Vagina (tissue), 2 donors: ENCODE measurements at regions of chr2 and their contacts with region 1.

Region 1: DNA sequence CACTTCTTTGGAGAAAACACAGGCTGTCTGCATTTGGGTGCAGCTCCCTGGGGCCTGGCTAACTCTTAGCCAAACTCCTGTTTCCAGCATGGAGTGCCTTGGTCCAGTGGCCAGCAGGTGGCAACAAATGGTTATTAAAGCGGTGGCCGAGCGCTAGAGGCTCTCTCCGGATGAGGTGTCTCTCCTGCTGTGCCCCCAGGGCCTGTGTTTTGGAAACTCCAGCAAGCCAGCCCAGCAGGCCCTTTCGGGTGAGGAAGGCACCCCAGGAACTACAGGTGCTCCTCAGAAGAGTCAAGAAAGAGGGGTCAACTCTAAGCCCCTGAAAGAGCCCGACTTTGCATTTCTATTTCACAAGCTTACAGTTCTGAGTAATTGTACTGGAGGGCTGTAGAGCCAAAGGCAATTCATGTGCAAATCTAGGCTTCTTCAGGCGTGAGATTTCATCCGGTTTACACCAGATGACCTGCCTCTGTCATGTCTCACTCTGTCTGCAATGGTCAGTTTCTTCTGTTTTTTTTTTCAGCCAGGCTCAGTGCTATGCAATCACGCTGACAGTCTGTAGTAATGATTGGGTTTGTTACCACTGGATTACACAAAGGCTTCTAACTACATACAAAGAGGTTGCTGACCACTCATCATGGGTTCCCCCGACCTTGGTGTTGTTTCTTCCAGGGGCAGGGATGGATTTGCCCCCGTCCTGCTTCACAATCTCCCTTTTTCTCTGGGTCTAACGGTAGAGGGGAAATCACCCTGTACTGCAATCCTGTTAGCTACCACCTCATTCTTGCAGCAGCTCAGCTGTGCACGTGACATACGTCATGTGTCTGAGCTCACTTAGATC is 7.6 kb upstream of the CHRNA1 start:
- DNase-seq: no peak
- H3K4me3 ChIP-seq: no peak overlapping the region
- H3K27ac ChIP-seq: peak overlapping the region; percentile 66
- H3K4me1 ChIP-seq: peaks cover 10% of the 10 kb centered on the region
- H3K27me3 ChIP-seq: no peaks in the 10 kb centered on the region
- CTCF ChIP-seq: peak; percentile 69 to 78 (median 78)
- POLR2A ChIP-seq: no peak

Region 2: DNA sequence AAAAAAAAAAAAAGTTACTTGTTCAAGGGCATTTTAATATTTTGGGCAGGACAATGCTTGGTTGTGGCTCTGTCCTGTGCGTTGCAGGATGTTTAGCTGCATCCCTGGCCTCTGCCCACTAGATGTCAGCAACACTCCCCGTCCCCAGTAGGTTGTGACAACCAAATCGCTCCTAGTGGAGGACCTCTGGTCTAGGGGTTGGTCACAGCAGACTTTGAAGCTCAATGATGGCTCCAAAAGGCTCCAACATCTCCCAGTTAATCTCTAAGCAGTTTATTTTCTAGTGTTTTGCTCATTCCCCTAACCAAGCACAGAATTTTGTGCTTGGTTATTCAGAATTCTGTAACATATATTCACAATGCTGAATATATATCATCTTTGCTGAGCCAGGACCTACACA is 74.6 kb before region 1 on chr2:
- intact Hi-C with region 1: no loop called
- DNase-seq: no peak
- H3K4me3 ChIP-seq: no peak overlapping the region
- H3K27ac ChIP-seq: no peak overlapping the region
- H3K4me1 ChIP-seq: no peaks in the 10 kb centered on the region
- H3K27me3 ChIP-seq: no peaks in the 10 kb centered on the region
- CTCF ChIP-seq: peak; percentile 20 to 49 (median 29)
- POLR2A ChIP-seq: no peak

Region 3: GRCh38 chr2:174846941-174847938 is 75.4 kb after region 1 on chr2:
- intact Hi-C with region 1: no loop called
- DNase-seq: no peak
- H3K4me3 ChIP-seq: peak overlapping the region; percentile 18 to 31
- H3K27ac ChIP-seq: peak overlapping the region; percentile 42
- H3K4me1 ChIP-seq: no peaks in the 10 kb centered on the region
- H3K27me3 ChIP-seq: no peaks in the 10 kb centered on the region
- CTCF ChIP-seq: no peak
- POLR2A ChIP-seq: no peak

Region 4: DNA sequence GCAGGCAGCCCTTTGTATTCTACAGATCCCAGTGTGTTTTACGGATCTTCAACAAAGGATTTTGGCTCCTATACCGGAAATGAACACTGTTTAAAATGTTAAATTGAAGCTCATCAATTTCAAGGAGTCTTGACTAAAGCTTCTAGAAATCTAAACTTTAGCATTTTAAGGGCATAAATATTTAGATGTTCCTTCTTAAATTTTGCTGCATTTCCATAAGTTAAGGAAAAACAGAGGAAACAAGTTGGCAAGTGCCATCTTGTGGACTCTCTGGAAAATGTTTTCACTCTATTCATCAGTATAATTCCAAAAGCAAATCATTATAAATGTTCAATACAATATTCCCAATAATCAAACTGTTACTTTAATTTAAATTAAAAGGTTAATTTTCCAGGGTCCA is 213.8 kb after region 1 on chr2:
- intact Hi-C with region 1: loop called (anchors 5 kb)
- DNase-seq: no peak
- H3K4me3 ChIP-seq: no peak overlapping the region
- H3K27ac ChIP-seq: no peak overlapping the region
- H3K4me1 ChIP-seq: no peaks in the 10 kb centered on the region
- H3K27me3 ChIP-seq: no peaks in the 10 kb centered on the region
- CTCF ChIP-seq: peak in 1 of 3 experiments; percentile 41
- POLR2A ChIP-seq: no peak